ENCODE measurements at regions of chr2 and their contacts with region 1.

Region 1: GRCh38 chr2:118197011-118197675 is 108.9 kb downstream of the INSIG2 start:
- DNase-seq: no peak
- ATAC-seq: peak in 1 of 4 donors; percentile 37
- H3K4me3 ChIP-seq: no peak overlapping the region
- H3K27ac ChIP-seq: no peak overlapping the region
- H3K4me1 ChIP-seq: no peaks in the 10 kb centered on the region
- H3K27me3 ChIP-seq: no peaks in the 10 kb centered on the region
- CTCF ChIP-seq: no peak

Region 2: GRCh38 chr2:118046634-118047210 is 150.4 kb before region 1 on chr2:
- intact Hi-C with region 1: loop called in 1 of 3 experiments (anchors 10 kb)
- DNase-seq: no peak
- ATAC-seq: peak; percentile 85 to 95 (median 90)
- H3K4me3 ChIP-seq: peak overlapping the region in 1 of 4 donors; percentile 15
- H3K27ac ChIP-seq: no peak overlapping the region
- H3K4me1 ChIP-seq: peaks cover 0 to 11% (median 4%) of the 10 kb centered on the region in 3 donors
- H3K27me3 ChIP-seq: no peaks in the 10 kb centered on the region
- CTCF ChIP-seq: peak in 2 of 4 donors; percentile 26 to 33

Region 3: DNA sequence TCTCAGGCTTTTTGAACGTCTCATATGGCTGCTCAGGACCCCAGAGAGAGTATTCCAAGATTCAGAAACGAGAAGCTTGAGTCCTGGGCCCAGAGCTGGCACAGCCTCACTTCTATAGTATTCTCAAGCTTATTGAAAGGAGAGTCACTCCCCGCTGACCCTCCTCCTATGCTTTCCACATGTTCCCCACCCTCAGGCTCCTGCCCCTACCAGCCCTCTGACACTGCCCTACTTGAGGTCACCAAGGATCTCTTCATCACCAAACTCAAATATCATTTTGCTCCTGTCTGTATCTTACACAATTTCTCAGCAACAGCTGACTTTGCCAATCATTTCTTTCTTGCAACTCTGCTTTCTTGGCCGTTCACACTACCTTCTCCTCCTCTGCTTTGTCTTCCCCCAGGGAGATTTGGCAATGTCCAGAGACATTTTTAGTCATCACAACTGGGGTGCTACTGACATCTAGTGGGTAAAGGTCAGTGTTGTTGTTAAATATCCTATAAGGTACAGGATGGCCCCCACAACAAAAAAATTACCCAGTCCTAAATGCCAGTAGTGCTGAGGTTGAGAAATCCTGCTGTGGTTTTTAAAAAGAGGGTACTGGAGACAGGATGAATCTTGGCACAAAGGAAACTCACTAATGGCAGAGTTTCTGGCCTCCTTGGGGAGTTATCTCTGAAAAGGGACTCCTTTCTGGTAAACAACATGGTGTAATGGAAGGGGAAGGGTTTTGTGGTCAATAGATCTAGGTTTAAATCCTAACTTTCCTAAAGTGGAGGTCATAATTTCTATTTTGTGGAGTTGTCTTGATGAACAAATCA is 135.8 kb before region 1 on chr2:
- intact Hi-C with region 1: loop called in 1 of 3 experiments (anchors 10 kb)
- DNase-seq: peak in 1 of 6 donors; percentile 17
- ATAC-seq: peak; percentile 61 to 87 (median 74)
- H3K4me3 ChIP-seq: no peak overlapping the region
- H3K27ac ChIP-seq: no peak overlapping the region
- H3K4me1 ChIP-seq: peaks cover 0 to 8% (median 4%) of the 10 kb centered on the region in 3 donors
- H3K27me3 ChIP-seq: no peaks in the 10 kb centered on the region
- CTCF ChIP-seq: peak in 2 of 4 donors; percentile 11 to 27